Activated CD4-positive, alpha-beta T cell treated with anti-CD3 and anti-CD28 coated beads for 36 hours (primary cell): ENCODE measurements at regions of chr3 and their contacts with region 1.

Region 1: DNA sequence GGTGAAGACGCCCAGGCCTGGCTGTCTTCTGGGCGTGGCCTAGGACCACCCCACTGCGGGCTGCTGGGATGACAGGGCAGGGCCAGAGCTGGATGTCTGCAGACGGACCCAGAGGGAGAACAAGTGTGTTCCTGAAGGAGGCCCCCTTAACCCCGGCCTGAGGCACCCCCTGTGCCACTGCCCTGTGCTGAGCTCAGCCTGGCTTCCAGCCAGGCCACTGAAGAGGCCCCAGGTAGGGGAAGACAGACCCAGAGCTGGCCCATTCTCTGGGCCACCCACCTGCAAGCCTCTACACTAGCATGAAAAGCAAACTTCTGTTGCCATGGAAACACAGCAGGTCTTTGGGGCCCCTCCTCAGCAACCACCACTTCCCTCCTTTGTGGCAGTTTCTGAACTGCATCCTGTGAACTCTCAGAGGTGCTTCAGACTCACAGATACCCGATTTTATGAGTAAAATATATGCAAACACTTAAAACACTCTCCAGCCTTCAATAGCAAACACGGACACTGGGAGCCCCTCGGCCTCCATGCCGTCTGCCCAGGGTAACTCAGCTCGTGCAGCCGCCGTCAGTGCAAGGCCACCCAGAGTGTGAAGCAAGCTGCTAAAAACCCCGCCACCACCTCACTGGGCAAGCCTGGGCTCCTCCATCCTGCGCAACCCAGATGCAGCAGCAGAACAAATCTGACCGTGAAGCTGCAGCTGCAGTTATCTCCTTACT is 42.5 kb downstream of the CMTM6 start:
- DNase-seq: peak; percentile 81
- ATAC-seq: peak; percentile 90
- H3K4me3 Mint-ChIP-seq: peak overlapping the region; percentile 56
- H3K27ac Mint-ChIP-seq: no peak overlapping the region
- H3K4me1 Mint-ChIP-seq: peaks cover 34% of the 10 kb centered on the region
- H3K27me3 Mint-ChIP-seq: no peaks in the 10 kb centered on the region

Region 2: GRCh38 chr3:32401556-32402081 is 58.6 kb before region 1 on chr3:
- CTCF ChIA-PET with region 1: no interaction called
- POLR2A ChIA-PET with region 1: no interaction called
- intact Hi-C with region 1: loop called in 1 of 2 experiments (anchors 2 kb)
- DNase-seq: peak; percentile 79
- ATAC-seq: peak; percentile 78
- H3K4me3 Mint-ChIP-seq: peak overlapping the region; percentile 90
- H3K27ac Mint-ChIP-seq: peak overlapping the region; percentile 100
- H3K4me1 Mint-ChIP-seq: peaks cover 71% of the 10 kb centered on the region
- H3K27me3 Mint-ChIP-seq: no peaks in the 10 kb centered on the region

Region 3: DNA sequence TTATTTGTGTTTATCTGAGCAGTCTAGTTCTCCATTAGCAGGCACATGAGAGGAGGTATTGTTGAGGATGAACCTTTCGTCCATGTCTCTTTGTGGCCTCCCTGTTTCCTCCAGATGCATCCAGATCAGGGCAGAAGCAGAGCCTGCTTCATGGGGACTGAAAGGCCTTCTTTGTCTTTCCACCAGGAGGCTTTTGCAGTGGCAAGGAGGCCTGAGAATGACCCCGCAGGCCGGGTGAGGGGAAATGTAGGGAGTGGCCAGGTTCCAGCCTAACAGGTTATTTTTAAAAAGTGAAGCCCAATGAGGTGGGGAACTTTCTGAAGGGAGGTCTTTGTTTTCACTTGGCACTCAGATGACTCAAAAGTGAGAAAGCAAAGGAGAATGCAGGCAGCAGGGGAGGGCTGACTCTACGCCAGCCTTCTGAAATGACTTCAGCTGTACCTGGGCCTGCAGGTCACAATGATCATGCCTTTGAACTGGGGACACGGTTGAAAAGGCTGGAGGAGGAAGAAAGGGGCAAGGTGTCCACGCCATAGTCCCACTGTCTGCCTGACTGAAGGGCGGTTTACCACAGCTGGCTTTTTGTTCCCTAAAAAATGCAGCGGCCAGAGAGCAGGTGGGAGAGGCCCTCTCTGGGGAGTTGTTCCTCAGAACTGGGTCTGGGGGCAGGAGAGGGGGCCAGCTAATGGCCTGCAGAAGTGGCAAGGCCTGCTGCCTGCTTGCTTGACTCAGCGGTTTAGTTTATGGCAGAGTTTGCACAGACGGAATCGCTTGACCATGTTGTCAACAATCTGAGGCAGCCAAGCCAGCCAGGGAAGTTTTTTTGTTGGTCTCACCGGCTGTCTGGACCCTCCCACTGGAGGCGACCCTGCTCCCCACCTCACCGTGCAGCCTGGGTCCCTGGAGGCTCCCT is 39.8 kb before region 1 on chr3:
- CTCF ChIA-PET with region 1: interaction called, 3 read pairs
- POLR2A ChIA-PET with region 1: interaction called, 5 read pairs
- intact Hi-C with region 1: loop called (anchors 2 to 5 kb)
- DNase-seq: peak; percentile 74
- ATAC-seq: peak; percentile 86
- H3K4me3 Mint-ChIP-seq: peak overlapping the region; percentile 23
- H3K27ac Mint-ChIP-seq: peak overlapping the region; percentile 90
- H3K4me1 Mint-ChIP-seq: peaks cover 95% of the 10 kb centered on the region
- H3K27me3 Mint-ChIP-seq: no peaks in the 10 kb centered on the region

Region 4: DNA sequence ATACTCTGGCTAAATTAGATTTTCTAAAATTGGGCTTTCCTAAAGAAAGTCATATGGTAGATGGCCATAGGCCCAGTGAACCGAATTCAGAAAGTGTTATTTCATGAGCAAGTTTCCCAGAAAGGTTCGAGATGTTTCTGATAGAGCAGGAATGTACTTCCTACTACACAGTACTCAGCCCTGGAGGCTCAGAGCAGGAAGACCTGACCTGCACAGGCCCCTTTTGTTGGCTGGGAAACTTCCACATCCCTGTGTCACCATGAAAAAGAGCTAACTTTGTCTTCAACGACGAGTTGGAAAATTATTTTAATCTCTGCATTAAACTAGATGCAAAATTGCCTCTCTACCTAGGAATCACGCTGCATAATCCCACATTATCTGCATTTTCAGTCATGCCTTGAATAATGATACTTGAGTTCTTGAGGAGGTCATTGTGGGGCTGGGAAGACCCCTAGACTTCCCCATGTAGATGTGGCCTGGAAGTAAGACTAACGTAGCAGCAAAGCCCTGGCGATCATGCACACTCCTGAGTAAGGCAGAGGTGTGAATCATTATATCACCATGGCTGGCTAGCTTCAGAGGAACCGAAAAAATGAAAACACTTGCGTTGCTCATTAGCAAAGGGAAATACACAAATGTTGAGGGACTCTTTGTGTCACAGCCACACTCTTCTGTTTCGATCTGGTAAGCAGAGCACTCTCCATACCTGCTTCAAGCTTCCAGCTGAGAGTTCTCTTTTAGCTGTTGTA is 21.4 kb before region 1 on chr3:
- CTCF ChIA-PET with region 1: interaction called, 8 read pairs
- POLR2A ChIA-PET with region 1: interaction called, 3 read pairs
- intact Hi-C with region 1: loop called (anchors 1 to 2 kb)
- DNase-seq: peak; percentile 61
- ATAC-seq: peak; percentile 83
- H3K4me3 Mint-ChIP-seq: peak overlapping the region; percentile 1
- H3K27ac Mint-ChIP-seq: peak overlapping the region; percentile 89
- H3K4me1 Mint-ChIP-seq: peaks cover 86% of the 10 kb centered on the region
- H3K27me3 Mint-ChIP-seq: no peaks in the 10 kb centered on the region

Region 5: DNA sequence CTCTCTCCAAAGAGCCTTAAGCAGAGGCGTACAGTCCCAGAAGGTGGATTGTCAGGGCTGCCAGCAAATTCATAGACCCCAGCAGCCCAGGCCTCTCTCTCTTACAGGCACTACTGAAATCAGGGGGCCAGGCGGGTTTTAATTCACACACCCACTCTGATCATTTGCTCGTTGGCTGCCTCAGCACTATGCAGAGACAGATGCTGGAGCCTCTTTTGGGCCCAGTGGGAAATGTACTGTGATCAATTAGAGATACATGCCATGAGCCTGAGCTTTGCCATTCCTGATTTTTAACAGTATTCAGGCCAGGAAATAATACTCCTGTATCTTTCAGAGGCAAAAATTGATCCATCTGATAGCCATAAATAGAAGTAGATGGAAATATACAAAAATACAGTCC is 10.5 kb before region 1 on chr3:
- CTCF ChIA-PET with region 1: no interaction called
- POLR2A ChIA-PET with region 1: no interaction called
- intact Hi-C with region 1: no loop called
- DNase-seq: no peak
- ATAC-seq: no peak
- H3K4me3 Mint-ChIP-seq: no peak overlapping the region
- H3K27ac Mint-ChIP-seq: no peak overlapping the region
- H3K4me1 Mint-ChIP-seq: peaks cover 37% of the 10 kb centered on the region
- H3K27me3 Mint-ChIP-seq: no peaks in the 10 kb centered on the region

Region 6: GRCh38 chr3:32685543-32686185 is 225.5 kb after region 1 on chr3:
- CTCF ChIA-PET with region 1: no interaction called
- POLR2A ChIA-PET with region 1: no interaction called
- intact Hi-C with region 1: no loop called
- DNase-seq: no peak
- ATAC-seq: no peak
- H3K4me3 Mint-ChIP-seq: peak overlapping the region; percentile 88
- H3K27ac Mint-ChIP-seq: peak overlapping the region; percentile 87
- H3K4me1 Mint-ChIP-seq: peaks cover 33% of the 10 kb centered on the region
- H3K27me3 Mint-ChIP-seq: no peaks in the 10 kb centered on the region